ENCODE measurements at regions of chr3 and their contacts with region 1.

Region 1: GRCh38 chr3:112405845-112406244 is 72.9 kb downstream of the CD200 start:
- DNase-seq: no peak
- ATAC-seq: no peak
- H3K4me3 ChIP-seq: no peak overlapping the region
- H3K4me3 Mint-ChIP-seq: no peak overlapping the region
- H3K27ac ChIP-seq: no peak overlapping the region
- H3K27ac Mint-ChIP-seq: no peak overlapping the region
- H3K4me1 ChIP-seq: peaks cover 12 to 15% of the 10 kb centered on the region in 2 donors
- H3K4me1 Mint-ChIP-seq: peaks cover 19% of the 10 kb centered on the region
- H3K27me3 ChIP-seq: no peaks in the 10 kb centered on the region
- H3K27me3 Mint-ChIP-seq: no peaks in the 10 kb centered on the region
- CTCF ChIP-seq: no peak

Region 2: GRCh38 chr3:112357930-112358780 is 47.7 kb before region 1 on chr3:
- CTCF ChIA-PET with region 1: interaction called, 4 read pairs
- POLR2A ChIA-PET with region 1: no interaction called
- intact Hi-C with region 1: loop called (anchors 10 kb)
- DNase-seq: peak; percentile 57
- ATAC-seq: peak; percentile 53
- H3K4me3 ChIP-seq: peak overlapping the region in 4 of 5 experiments; percentile 12 to 47 (median 36)
- H3K4me3 Mint-ChIP-seq: peak overlapping the region; percentile 73
- H3K27ac ChIP-seq: peak overlapping the region; percentile 53 to 88
- H3K27ac Mint-ChIP-seq: peak overlapping the region; percentile 79
- H3K4me1 ChIP-seq: peaks cover 8 to 13% of the 10 kb centered on the region in 2 donors
- H3K4me1 Mint-ChIP-seq: peaks cover 29% of the 10 kb centered on the region
- H3K27me3 ChIP-seq: no peaks in the 10 kb centered on the region
- H3K27me3 Mint-ChIP-seq: no peaks in the 10 kb centered on the region
- CTCF ChIP-seq: no peak

Region 3: GRCh38 chr3:112464264-112464663 is 58.4 kb after region 1 on chr3:
- CTCF ChIA-PET with region 1: no interaction called
- POLR2A ChIA-PET with region 1: no interaction called
- intact Hi-C with region 1: no loop called
- DNase-seq: peak; percentile 60
- ATAC-seq: peak; percentile 76
- H3K4me3 ChIP-seq: peak overlapping the region in 1 of 5 experiments; percentile 53
- H3K4me3 Mint-ChIP-seq: peak overlapping the region; percentile 67
- H3K27ac ChIP-seq: peak overlapping the region; percentile 64 to 80
- H3K27ac Mint-ChIP-seq: peak overlapping the region; percentile 81
- H3K4me1 ChIP-seq: peaks cover 81 to 86% of the 10 kb centered on the region in 2 donors
- H3K4me1 Mint-ChIP-seq: peaks cover 86% of the 10 kb centered on the region
- H3K27me3 ChIP-seq: no peaks in the 10 kb centered on the region
- H3K27me3 Mint-ChIP-seq: no peaks in the 10 kb centered on the region
- CTCF ChIP-seq: no peak

Measured in B cell (primary cell).